ENCODE measurements at regions of chr15 and their contacts with region 1.

Region 1: GRCh38 chr15:99068186-99068585 is 36.7 kb upstream of the SYNM start:
- DNase-seq: no peak
- H3K4me3 ChIP-seq: no peak overlapping the region
- H3K27ac ChIP-seq: no peak overlapping the region
- H3K4me1 ChIP-seq: no peaks in the 10 kb centered on the region
- H3K27me3 ChIP-seq: no peaks in the 10 kb centered on the region

Region 2: GRCh38 chr15:98518823-98519561 is 549.2 kb before region 1 on chr15:
- in situ Hi-C with region 1: loop called (anchors 10 kb)
- DNase-seq: peak; percentile 85
- H3K4me3 ChIP-seq: peak overlapping the region; percentile 13; the same call in 1 of the 2 replicates
- H3K27ac ChIP-seq: no peak overlapping the region
- H3K4me1 ChIP-seq: no peaks in the 10 kb centered on the region
- H3K27me3 ChIP-seq: no peaks in the 10 kb centered on the region; the same call in 1 of the 2 replicates

Region 3: DNA sequence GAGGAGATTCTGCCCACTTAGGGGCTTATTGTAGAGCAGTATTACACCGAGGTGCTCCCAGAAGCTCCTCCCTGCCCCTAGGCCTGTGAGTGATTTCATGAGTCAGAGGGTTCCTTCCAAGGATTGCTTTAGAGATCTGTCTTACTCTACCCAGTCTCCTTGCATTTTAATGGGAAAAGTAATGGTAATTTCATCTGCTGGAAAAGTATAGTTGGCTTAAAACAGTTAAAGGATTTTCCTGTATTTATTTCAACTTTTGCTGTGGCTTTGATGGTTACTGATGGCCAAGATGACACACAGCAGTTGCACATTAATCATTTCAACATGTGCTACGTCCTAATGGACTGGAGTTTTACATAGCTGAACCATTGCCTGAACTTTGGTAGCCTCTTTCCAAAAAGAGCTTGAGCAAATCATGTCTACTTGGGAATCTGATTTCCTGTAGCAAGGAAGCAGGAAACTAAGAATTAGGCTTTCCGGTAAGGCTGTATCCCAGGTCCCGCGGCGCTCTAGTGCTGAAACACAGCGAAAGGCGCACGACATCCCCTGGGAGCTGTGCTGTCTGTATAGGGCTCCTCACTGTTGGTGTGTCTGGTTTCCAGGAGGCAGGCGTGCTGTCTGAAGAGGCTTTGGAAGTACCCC is 51.4 kb before region 1 on chr15:
- in situ Hi-C with region 1: no loop called
- DNase-seq: peak; percentile 84
- H3K4me3 ChIP-seq: no peak overlapping the region
- H3K27ac ChIP-seq: peak overlapping the region; percentile 60
- H3K4me1 ChIP-seq: peaks cover 21% of the 10 kb centered on the region
- H3K27me3 ChIP-seq: no peaks in the 10 kb centered on the region

Measured in GM23248 (cell line).